Activated T-helper 2 cell treated with anti-CD3 and anti-CD28 coated beads, Interferon-gamma antibody, Interleukin-2, Interleukin-4, amounts not matched to agents 10 μg/mL and 5 μg/mL and 100 μg/mL, durations not matched to agents 14 hours and 24 hours and 36 hours (primary cell): ENCODE measurements at regions of chr16 and their contacts with region 1.

Region 1: GRCh38 chr16:18969050-18969854 is 14.5 kb upstream of the TMC7 start:
- DNase-seq: peak; percentile 70
- H3K4me3 Mint-ChIP-seq: peak overlapping the region; percentile 51
- H3K27ac Mint-ChIP-seq: no peak overlapping the region
- H3K4me1 Mint-ChIP-seq: peaks cover 7% of the 10 kb centered on the region
- H3K27me3 Mint-ChIP-seq: peaks cover 3% of the 10 kb centered on the region

Region 2: DNA sequence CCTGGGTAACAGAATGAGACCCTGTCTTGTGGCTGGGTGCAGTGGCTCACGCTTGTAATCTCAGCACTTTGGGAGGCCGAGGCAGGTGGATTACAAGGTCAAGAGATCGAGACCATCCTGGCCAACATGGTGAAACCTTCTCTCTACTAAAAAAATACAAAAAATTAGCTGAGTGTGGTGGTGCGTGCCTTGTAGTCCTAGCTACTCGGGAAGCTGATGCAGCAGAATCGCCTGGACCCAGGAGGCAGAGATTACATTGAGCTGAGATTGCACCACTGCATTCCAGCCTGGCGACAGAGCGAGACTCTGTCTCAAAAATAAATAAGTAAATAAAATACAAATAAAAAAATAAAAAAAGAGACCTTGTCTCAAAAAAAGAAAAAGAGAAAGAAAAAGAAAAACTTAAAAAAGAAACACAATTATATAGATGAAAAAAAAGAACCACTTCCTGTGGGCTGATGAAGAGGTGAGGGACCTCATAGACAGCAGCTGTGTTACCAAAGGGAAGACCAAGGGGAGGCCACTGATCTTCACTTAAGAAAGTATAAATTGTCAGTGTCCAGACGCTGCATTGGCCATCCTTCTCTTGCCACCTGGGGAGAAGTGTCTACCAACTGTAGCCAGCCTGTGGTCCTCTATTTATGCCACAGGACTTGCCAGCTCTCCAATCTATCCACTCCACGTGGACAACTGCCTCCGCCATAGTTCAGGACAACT is 18.6 kb before region 1 on chr16:
- intact Hi-C with region 1: loop called (anchors 2 kb)
- DNase-seq: no peak
- H3K4me3 Mint-ChIP-seq: peak overlapping the region; percentile 5
- H3K27ac Mint-ChIP-seq: no peak overlapping the region
- H3K4me1 Mint-ChIP-seq: peaks cover 22% of the 10 kb centered on the region
- H3K27me3 Mint-ChIP-seq: peaks cover 4% of the 10 kb centered on the region

Region 3: GRCh38 chr16:19086322-19087199 is 117.3 kb after region 1 on chr16:
- intact Hi-C with region 1: no loop called
- DNase-seq: peak; percentile 72
- H3K4me3 Mint-ChIP-seq: peak overlapping the region; percentile 64
- H3K27ac Mint-ChIP-seq: no peak overlapping the region
- H3K4me1 Mint-ChIP-seq: peaks cover 6% of the 10 kb centered on the region
- H3K27me3 Mint-ChIP-seq: peaks cover 12% of the 10 kb centered on the region